T-cell (primary cell): ENCODE measurements at regions of chr5 and their contacts with region 1.

Region 1: GRCh38 chr5:157271740-157272271 is 5.9 kb downstream of the CYFIP2 start:
- DNase-seq: peak; percentile 63 to 99 (median 91)
- ATAC-seq: peak; percentile 91 to 94 (median 92)
- H3K4me3 ChIP-seq: peak overlapping the region in 1 of 2 donors; percentile 3
- H3K4me3 Mint-ChIP-seq: peak overlapping the region; percentile 65 to 92 (median 73)
- H3K27ac ChIP-seq: peak overlapping the region; percentile 81
- H3K27ac Mint-ChIP-seq: peak overlapping the region; percentile 99
- H3K4me1 ChIP-seq: peaks cover 73 to 74% of the 10 kb centered on the region in 2 experiments
- H3K4me1 Mint-ChIP-seq: peaks cover 89 to 94% (median 93%) of the 10 kb centered on the region in 3 donors
- H3K27me3 ChIP-seq: no peaks in the 10 kb centered on the region
- H3K27me3 Mint-ChIP-seq: no peaks in the 10 kb centered on the region

Region 2: DNA sequence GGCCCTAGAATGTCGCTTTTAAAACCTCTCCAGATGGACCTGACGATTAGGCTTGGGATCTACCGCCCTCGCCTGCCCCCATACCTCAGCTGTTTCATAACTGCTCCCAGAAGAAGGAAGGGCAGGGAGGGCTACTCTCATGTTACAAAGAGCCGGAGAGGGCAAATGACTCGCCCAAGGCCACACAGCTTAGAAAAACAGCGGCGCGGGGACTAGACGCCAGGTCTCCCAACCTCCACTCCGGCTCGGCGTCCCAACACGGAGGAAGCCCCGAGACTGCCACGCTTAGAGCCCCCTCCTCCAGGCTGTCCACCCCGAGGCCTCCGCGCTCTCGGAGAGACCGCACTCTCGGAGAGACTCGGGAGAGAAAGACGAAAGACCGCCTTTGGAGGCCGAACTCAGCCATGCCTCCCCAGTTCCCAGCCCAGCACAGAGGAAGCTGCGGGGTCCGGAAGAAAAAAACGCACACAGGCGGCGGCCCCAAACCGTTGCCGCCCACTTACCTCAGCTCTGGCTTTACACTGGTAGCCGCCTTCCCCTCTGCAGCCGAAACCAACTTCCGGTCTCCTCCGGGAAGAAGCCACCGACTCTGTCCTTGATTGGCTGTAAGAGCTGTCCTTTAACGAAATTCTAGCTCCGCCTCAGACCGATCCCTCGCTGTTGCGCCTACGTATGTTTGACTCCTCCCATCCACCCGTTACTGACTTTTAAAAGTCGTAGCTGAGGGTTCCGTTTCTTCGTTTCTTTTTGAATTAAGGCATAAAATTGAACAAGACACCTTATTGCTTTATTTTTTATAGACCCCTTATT is 129.3 kb before region 1 on chr5 and contains the start of gene MED7:
- CTCF ChIA-PET with region 1: interaction called, 10 to 23 read pairs
- POLR2A ChIA-PET with region 1: interaction called in 1 of 2 experiments, 10 read pairs
- DNase-seq: peak; percentile 68 to 99 (median 93)
- ATAC-seq: peak; percentile 96 to 98 (median 96)
- H3K4me3 ChIP-seq: peak within 1 kb of the TSS; percentile 93 to 98
- H3K4me3 Mint-ChIP-seq: peak within 1 kb of the TSS; percentile 84 to 97 (median 95)
- H3K27ac ChIP-seq: peak within 1 kb of the TSS; percentile 92
- H3K27ac Mint-ChIP-seq: peak within 1 kb of the TSS; percentile 99
- H3K4me1 ChIP-seq: peaks cover 15 to 30% of the 10 kb centered on the region in 2 experiments
- H3K4me1 Mint-ChIP-seq: peaks cover 32 to 54% (median 50%) of the 10 kb centered on the region in 3 donors
- H3K27me3 ChIP-seq: no peaks in the 10 kb centered on the region
- H3K27me3 Mint-ChIP-seq: no peaks in the 10 kb centered on the region
- total RNA-seq, gene MED7: 5.7 to 14.9 (median 13.1) TPM

Region 3: DNA sequence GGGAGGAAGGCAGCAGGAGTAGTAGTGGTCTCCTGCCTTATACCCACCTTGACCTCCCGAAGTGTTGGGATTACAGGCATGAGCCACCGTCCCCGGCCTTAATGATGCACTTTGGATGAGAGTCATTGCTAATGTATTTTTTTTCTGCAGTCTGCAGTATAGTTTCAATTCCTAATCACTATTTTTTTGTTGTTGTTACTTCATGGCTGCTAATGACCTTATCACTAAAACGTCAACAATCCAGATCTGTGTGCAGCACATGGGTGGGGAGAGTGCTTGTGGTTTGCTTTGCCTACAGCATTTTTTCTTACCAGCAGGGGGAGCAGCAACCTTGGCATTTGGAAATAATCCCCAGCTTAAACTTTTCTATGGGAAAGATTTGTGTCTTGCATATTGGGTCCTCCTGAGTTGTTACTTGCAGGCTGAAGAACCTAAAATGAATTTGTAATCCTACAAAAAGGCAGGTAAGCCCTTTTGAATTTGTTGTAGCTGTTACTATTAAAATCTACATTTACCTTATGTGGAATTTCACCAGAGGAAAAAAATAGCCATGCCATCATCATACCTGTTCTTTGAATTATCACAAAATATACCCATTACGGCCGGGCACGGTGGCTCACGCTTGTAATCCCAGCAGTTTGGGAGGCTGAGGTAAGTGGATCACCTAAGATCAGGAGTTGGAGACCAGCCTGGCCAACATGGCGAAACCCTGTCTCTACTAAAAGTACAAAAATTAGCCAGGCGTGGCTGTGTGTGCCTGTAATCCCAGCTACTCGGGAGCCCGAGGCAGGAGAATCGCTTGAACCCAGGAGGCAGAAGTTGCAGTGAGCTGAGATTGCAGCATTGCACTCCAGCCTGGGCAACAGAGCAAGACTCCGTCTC is 122.8 kb before region 1 on chr5:
- CTCF ChIA-PET with region 1: interaction called, 10 to 12 read pairs
- POLR2A ChIA-PET with region 1: interaction called in 1 of 2 experiments, 4 read pairs
- DNase-seq: peak; percentile 52 to 93 (median 76)
- ATAC-seq: peak; percentile 70 to 85 (median 78)
- H3K4me3 ChIP-seq: no peak overlapping the region
- H3K4me3 Mint-ChIP-seq: peak overlapping the region in 1 of 3 donors; percentile 29
- H3K27ac ChIP-seq: no peak overlapping the region
- H3K27ac Mint-ChIP-seq: peak overlapping the region; percentile 81 to 90
- H3K4me1 ChIP-seq: peaks cover 12 to 25% of the 10 kb centered on the region in 2 experiments
- H3K4me1 Mint-ChIP-seq: peaks cover 41 to 47% (median 46%) of the 10 kb centered on the region in 3 donors
- H3K27me3 ChIP-seq: no peaks in the 10 kb centered on the region
- H3K27me3 Mint-ChIP-seq: no peaks in the 10 kb centered on the region

Region 4: GRCh38 chr5:157219491-157220271 is 52.1 kb before region 1 on chr5:
- CTCF ChIA-PET with region 1: interaction called in 1 of 2 experiments, 4 read pairs
- POLR2A ChIA-PET with region 1: interaction called in 1 of 2 experiments, 11 read pairs
- DNase-seq: no peak
- ATAC-seq: no peak
- H3K4me3 ChIP-seq: no peak overlapping the region
- H3K4me3 Mint-ChIP-seq: peak overlapping the region; percentile 26 to 60 (median 29)
- H3K27ac ChIP-seq: peak overlapping the region; percentile 71
- H3K27ac Mint-ChIP-seq: peak overlapping the region; percentile 94
- H3K4me1 ChIP-seq: peaks cover 88 to 95% of the 10 kb centered on the region in 2 experiments
- H3K4me1 Mint-ChIP-seq: peaks cover 88 to 94% (median 92%) of the 10 kb centered on the region in 3 donors
- H3K27me3 ChIP-seq: no peaks in the 10 kb centered on the region
- H3K27me3 Mint-ChIP-seq: no peaks in the 10 kb centered on the region

Region 5: GRCh38 chr5:157253547-157253946 is 18.3 kb before region 1 on chr5:
- CTCF ChIA-PET with region 1: interaction called, 3 to 30 read pairs
- POLR2A ChIA-PET with region 1: interaction called, 8 to 9 read pairs
- DNase-seq: peak in 1 of 35 experiments; percentile 61
- ATAC-seq: no peak
- H3K4me3 ChIP-seq: no peak overlapping the region
- H3K4me3 Mint-ChIP-seq: peak overlapping the region; percentile 18 to 64 (median 53)
- H3K27ac ChIP-seq: peak overlapping the region; percentile 80
- H3K27ac Mint-ChIP-seq: peak overlapping the region; percentile 94 to 95
- H3K4me1 ChIP-seq: peaks cover 71 to 86% of the 10 kb centered on the region in 2 experiments
- H3K4me1 Mint-ChIP-seq: peaks cover 96 to 98% (median 97%) of the 10 kb centered on the region in 3 donors
- H3K27me3 ChIP-seq: no peaks in the 10 kb centered on the region
- H3K27me3 Mint-ChIP-seq: no peaks in the 10 kb centered on the region

Region 6: GRCh38 chr5:157369507-157369906 is 97.7 kb after region 1 on chr5:
- CTCF ChIA-PET with region 1: no interaction called
- POLR2A ChIA-PET with region 1: interaction called in 1 of 2 experiments, 12 read pairs
- DNase-seq: no peak
- ATAC-seq: no peak
- H3K4me3 ChIP-seq: no peak overlapping the region
- H3K4me3 Mint-ChIP-seq: no peak overlapping the region
- H3K27ac ChIP-seq: no peak overlapping the region
- H3K27ac Mint-ChIP-seq: peak overlapping the region in 1 of 2 donors; percentile 53
- H3K4me1 ChIP-seq: no peaks in the 10 kb centered on the region
- H3K4me1 Mint-ChIP-seq: peaks cover 0 to 6% (median 0%) of the 10 kb centered on the region in 3 donors
- H3K27me3 ChIP-seq: no peaks in the 10 kb centered on the region
- H3K27me3 Mint-ChIP-seq: no peaks in the 10 kb centered on the region